Astrocyte of the cerebellum (primary cell): ENCODE measurements at regions of chr17 and their contacts with region 1.

Region 1: GRCh38 chr17:17935321-17936271 is 36.6 kb downstream of the TOM1L2 start:
- DNase-seq: peak; percentile 63
- H3K4me3 ChIP-seq: no peak overlapping the region
- CTCF ChIP-seq: no peak

Region 2: GRCh38 chr17:17897442-17897841 is 38.2 kb before region 1 on chr17:
- in situ Hi-C with region 1: loop called (anchors 5 kb)
- DNase-seq: no peak
- H3K4me3 ChIP-seq: no peak overlapping the region
- CTCF ChIP-seq: no peak

Region 3: GRCh38 chr17:17985555-17985954 is 50.0 kb after region 1 on chr17:
- in situ Hi-C with region 1: no loop called
- DNase-seq: no peak
- H3K4me3 ChIP-seq: no peak overlapping the region
- CTCF ChIP-seq: peak; percentile 41